RWPE1 (cell line): ENCODE measurements at regions of chr14 and their contacts with region 1.

Region 1: GRCh38 chr14:103520657-103521437 is 1.8 kb downstream of the CKB start:
- DNase-seq: peak; percentile 64
- H3K27ac ChIP-seq: peak overlapping the region; percentile 100
- CTCF ChIP-seq: peak; percentile 74

Region 2: DNA sequence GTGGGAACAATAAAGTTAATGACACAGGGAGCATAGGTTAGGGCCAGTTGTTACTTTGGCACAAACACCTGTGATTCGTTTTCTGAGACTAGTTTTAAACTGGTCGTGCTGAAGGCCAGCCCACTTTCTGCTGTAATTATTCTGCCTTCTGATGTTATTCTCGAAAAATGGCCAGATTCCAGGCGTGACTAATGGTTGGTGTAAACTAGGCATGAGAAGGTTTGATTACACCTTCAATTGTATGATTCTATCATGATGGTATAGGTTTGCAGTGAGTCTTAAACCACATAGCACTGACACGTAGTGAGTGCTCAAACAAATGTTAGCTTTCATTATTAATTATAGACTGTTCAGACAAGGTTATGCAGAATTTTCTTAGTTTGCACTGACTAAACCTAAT is 37.2 kb before region 1 on chr14:
- CTCF ChIA-PET with region 1: no interaction called
- POLR2A ChIA-PET with region 1: no interaction called
- DNase-seq: peak; percentile 71
- H3K27ac ChIP-seq: no peak overlapping the region
- CTCF ChIP-seq: no peak

Region 3: GRCh38 chr14:103546652-103547454 is 26.0 kb after region 1 on chr14:
- CTCF ChIA-PET with region 1: interaction called, 57 read pairs
- POLR2A ChIA-PET with region 1: interaction called, 3 read pairs
- DNase-seq: peak; percentile 78
- H3K27ac ChIP-seq: peak overlapping the region; percentile 97
- CTCF ChIP-seq: peak; percentile 84

Region 4: GRCh38 chr14:103552011-103552845 is 31.4 kb after region 1 on chr14:
- CTCF ChIA-PET with region 1: interaction called, 57 read pairs
- POLR2A ChIA-PET with region 1: no interaction called
- DNase-seq: peak; percentile 73
- H3K27ac ChIP-seq: peak overlapping the region; percentile 97
- CTCF ChIP-seq: no peak

Region 5: DNA sequence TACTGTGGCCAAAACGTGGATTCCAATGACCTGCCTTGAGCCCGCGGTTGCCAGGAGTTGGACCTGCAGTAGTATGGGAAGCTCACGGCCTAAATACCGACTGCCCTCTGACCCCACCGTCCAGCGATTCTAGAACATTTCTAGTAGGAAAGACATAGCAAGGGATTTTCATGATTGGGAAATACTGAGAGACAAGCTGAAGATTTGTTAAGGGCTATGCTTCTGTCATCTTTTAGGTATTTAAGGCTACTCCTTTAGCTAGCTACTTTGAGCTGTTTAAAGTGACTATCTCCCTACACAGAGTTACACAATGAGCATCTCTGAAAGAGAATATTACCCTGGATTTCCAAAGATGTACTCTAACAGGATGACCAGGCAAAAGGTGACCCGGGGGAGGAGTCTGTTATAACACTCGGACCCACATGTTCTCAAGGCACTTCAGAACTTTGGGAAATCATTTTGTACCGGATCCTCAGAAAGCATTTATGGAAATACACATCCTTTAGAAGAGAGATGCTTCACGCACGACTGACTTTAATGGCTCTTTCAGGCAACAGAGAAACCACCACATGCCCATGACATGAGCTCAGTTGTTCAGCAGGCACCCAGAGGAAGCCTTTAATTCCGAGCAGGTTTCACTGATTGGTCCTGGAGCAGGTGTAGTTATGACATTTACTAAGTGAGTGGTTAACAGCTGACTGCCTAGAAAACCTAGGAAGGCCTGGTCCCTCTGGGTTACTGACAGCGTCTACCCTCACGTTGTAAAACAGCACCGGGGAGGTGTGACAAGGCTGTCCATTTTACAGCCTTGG is 37.4 kb after region 1 on chr14:
- CTCF ChIA-PET with region 1: interaction called, 13 read pairs
- POLR2A ChIA-PET with region 1: no interaction called
- DNase-seq: peak; percentile 19
- H3K27ac ChIP-seq: peak overlapping the region; percentile 63
- CTCF ChIP-seq: no peak